ENCODE measurements at regions of chr20 and their contacts with region 1.

Region 1: GRCh38 chr20:64079273-64080012 is at the start of gene RGS19:
- DNase-seq: peak; percentile 87
- ATAC-seq: peak; percentile 27
- H3K4me3 Mint-ChIP-seq: peak within 1 kb of the TSS; percentile 96
- H3K27ac Mint-ChIP-seq: peak within 1 kb of the TSS; percentile 94
- H3K4me1 Mint-ChIP-seq: peaks cover 35% of the 10 kb centered on the region
- H3K27me3 Mint-ChIP-seq: peaks cover 9% of the 10 kb centered on the region
- total RNA-seq, gene RGS19: 95.1 to 106 TPM

Region 2: DNA sequence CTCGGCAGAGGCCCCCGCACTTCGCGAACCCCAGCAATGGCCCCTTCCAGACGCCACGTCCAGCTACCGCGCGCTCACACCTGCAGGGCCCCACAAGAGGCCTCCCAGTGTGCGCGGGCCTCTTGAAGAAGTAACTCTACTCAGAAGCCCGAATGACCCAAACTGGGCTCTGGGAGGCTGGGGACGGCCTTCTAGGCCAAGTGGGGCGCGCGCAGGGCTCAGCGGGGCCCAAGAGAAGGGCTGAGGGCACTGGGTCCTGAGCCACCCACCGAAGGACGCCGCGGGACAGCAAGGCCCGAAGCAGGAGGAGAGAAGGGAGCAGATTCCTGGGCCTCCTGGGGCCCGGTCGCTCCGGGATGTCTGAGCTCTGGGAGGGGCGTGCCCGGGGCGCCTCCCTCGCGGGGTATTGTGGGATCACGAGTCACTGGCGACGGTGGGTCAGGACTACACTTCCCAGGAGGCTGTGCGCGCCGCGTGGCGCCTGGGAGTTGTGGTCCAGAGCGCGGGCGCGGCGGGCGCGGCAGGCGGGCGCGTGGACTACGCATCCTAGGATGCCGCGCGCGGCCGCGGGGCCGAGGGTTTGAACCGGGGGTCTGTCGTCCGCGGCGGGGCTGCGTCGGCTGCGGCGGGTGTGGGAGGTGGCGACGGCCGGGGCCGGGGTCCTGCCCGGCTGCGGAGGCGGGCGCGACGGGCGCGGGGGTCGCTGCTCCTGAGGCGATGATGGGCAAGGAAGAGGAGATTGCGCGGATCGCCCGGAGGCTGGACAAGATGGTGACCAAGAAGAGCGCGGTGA is 16.7 kb before region 1 on chr20 and contains the start of gene TCEA2:
- POLR2A ChIA-PET with region 1: interaction called, 114 read pairs
- DNase-seq: peak; percentile 96
- ATAC-seq: peak; percentile 76
- H3K4me3 Mint-ChIP-seq: peak within 1 kb of the TSS; percentile 95
- H3K27ac Mint-ChIP-seq: peak within 1 kb of the TSS; percentile 89
- H3K4me1 Mint-ChIP-seq: peaks cover 43% of the 10 kb centered on the region
- H3K27me3 Mint-ChIP-seq: no peaks in the 10 kb centered on the region
- total RNA-seq, gene TCEA2: 65.3 to 74.9 TPM

Region 3: DNA sequence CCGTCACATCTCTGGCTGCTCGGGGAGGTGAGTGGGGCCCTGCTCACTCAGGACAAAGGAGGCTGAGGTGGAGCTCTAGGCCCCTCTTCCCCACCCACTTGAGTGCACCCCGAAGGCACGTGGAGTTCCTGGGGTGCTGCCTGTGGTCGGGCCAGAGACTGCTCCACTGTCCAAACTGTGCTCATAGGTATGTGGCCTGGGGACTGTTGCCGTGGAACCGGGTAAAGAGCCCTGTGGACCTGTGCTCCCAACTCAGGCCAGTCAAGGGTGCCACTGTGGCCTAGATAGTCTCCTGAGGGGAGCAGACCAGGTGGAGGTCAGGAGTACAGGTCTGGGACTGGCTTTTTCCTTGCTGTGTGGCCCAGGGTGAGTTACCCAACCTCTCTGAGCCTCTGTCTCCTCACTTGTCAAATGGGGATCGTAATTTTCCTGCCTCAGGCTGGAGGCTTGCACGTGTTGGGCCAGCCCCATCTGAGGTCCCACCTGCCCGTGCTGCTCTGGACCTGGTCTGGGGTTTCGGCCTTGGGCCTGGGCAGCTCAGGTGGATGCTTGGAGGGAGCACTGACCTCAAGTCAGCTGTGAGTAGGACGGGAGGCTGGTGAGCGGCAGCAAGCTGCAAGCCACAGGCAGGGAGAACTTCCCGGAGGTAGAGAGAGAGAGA is 40.4 kb after region 1 on chr20:
- POLR2A ChIA-PET with region 1: interaction called, 13 read pairs
- DNase-seq: no peak
- ATAC-seq: no peak
- H3K4me3 Mint-ChIP-seq: peak overlapping the region; percentile 50
- H3K27ac Mint-ChIP-seq: peak overlapping the region; percentile 30
- H3K4me1 Mint-ChIP-seq: peaks cover 7% of the 10 kb centered on the region
- H3K27me3 Mint-ChIP-seq: peaks cover 27% of the 10 kb centered on the region

Measured in activated naive CD8-positive, alpha-beta T cell treated with anti-CD3 and anti-CD28 coated beads, Interleukin-2, amount 10 ng/mL, durations not matched to agents 7 days and 5 days (primary cell).